Mammary epithelial cell (primary cell): ENCODE measurements at regions of chr7 and their contacts with region 1.

Region 1: GRCh38 chr7:74505471-74506324 is 52.0 kb downstream of the GTF2IRD1 start:
- DNase-seq: no peak
- H3K4me3 ChIP-seq: no peak overlapping the region
- H3K27ac ChIP-seq: no peak overlapping the region
- H3K4me1 ChIP-seq: no peaks in the 10 kb centered on the region
- H3K27me3 ChIP-seq: no peaks in the 10 kb centered on the region
- CTCF ChIP-seq: no peak

Region 2: DNA sequence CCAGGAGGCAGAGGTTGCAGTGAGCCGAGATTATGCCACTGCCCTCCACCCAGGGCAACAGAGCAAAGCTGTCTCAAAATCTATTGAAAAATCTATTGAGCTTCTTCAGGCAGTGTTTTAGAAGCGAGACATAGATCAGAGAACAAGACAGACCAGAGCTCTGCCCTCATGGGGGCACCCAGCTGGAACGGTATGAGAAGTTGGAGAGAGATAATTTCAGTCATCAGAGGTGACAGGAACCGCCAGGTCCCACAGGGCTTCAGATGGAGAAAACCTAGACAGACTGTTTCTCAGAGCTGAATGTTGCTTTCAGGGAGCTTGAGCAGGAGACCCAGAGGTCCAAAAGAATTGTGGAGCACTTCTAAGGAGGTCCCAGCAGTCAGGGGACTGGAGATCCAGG is 66.2 kb before region 1 on chr7:
- CTCF ChIA-PET with region 1: no interaction called
- dilution Hi-C with region 1: loop called (anchors 5 kb)
- in situ Hi-C with region 1: no loop called
- intact Hi-C with region 1: no loop called
- DNase-seq: no peak
- H3K4me3 ChIP-seq: no peak overlapping the region
- H3K27ac ChIP-seq: no peak overlapping the region
- H3K4me1 ChIP-seq: no peaks in the 10 kb centered on the region
- H3K27me3 ChIP-seq: no peaks in the 10 kb centered on the region
- CTCF ChIP-seq: no peak

Region 3: GRCh38 chr7:74554178-74554577 is 48.5 kb after region 1 on chr7:
- CTCF ChIA-PET with region 1: no interaction called
- dilution Hi-C with region 1: loop called (anchors 5 kb)
- in situ Hi-C with region 1: no loop called
- intact Hi-C with region 1: no loop called
- DNase-seq: no peak
- H3K4me3 ChIP-seq: no peak overlapping the region
- H3K27ac ChIP-seq: no peak overlapping the region
- H3K4me1 ChIP-seq: no peaks in the 10 kb centered on the region
- H3K27me3 ChIP-seq: no peaks in the 10 kb centered on the region
- CTCF ChIP-seq: no peak

Region 4: DNA sequence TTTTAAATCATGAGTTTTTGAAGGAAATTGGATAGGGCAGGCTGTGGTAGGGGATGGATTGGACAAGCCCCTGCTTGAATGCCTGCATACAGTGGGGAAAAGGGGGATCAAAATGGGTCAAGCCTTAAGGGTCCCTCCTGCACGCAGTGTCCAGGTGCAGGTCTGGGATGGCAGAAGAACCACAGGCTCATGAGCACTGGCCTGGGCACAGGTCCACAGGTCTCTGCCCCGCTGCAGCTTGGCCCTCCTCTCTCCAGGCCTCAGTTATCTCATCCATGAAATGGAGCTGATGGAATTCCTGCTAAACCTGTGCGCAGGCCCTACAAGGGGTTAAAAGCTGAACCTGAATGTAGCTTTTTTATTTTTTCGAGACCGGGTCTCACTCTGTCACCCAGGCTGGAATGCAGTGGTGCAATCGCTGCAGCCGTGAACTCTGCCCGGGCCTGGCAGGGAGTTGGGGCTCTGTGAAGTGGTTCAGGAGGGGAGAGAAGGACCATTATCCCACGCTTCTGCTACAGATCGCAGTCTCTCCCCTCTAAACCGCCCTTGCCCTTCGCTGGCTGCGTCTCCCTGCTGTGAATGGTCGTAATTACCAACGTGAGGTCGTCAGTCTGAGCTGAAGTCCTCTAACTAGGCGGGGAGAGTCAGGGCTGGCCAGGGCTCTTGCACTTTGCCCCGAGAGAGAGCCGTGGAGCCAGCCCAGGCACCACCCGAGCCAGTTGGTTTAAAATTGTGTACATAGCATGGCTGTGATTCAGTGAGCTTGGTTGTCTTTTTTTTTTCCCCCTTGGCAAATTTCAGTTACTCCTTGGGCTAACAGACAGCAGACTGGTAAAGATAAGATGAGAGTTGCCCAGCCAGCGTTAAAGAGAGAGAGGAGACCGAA is 74.3 kb after region 1 on chr7:
- CTCF ChIA-PET with region 1: no interaction called
- dilution Hi-C with region 1: loop called (anchors 5 kb)
- in situ Hi-C with region 1: no loop called
- intact Hi-C with region 1: no loop called
- DNase-seq: peak; percentile 45
- H3K4me3 ChIP-seq: no peak overlapping the region
- H3K27ac ChIP-seq: no peak overlapping the region
- H3K4me1 ChIP-seq: peaks cover 49% of the 10 kb centered on the region
- H3K27me3 ChIP-seq: no peaks in the 10 kb centered on the region
- CTCF ChIP-seq: no peak